ENCODE measurements at regions of chr10 and their contacts with region 1.

Region 1: GRCh38 chr10:75099952-75100763 is 11.3 kb upstream of the SAMD8 start:
- DNase-seq: peak; percentile 52
- H3K4me3 ChIP-seq: no peak overlapping the region
- H3K27ac ChIP-seq: no peak overlapping the region
- H3K4me1 ChIP-seq: no peaks in the 10 kb centered on the region
- H3K27me3 ChIP-seq: no peaks in the 10 kb centered on the region
- CTCF ChIP-seq: peak; percentile 92 to 98
- POLR2A ChIP-seq: no peak

Region 2: GRCh38 chr10:74244097-74244685 is 856.0 kb before region 1 on chr10:
- CTCF ChIA-PET with region 1: interaction called, 124 read pairs
- POLR2A ChIA-PET with region 1: no interaction called
- dilution Hi-C with region 1: no loop called
- intact Hi-C with region 1: loop called (anchors 1 kb)
- DNase-seq: peak; percentile 75
- H3K4me3 ChIP-seq: no peak overlapping the region
- H3K27ac ChIP-seq: no peak overlapping the region
- H3K4me1 ChIP-seq: peaks cover 3% of the 10 kb centered on the region
- H3K27me3 ChIP-seq: no peaks in the 10 kb centered on the region
- CTCF ChIP-seq: peak; percentile 7 to 26
- POLR2A ChIP-seq: no peak

Region 3: GRCh38 chr10:74255888-74256357 is 844.2 kb before region 1 on chr10:
- CTCF ChIA-PET with region 1: interaction called, 13 read pairs
- POLR2A ChIA-PET with region 1: no interaction called
- dilution Hi-C with region 1: no loop called
- intact Hi-C with region 1: no loop called
- DNase-seq: no peak
- H3K4me3 ChIP-seq: no peak overlapping the region
- H3K27ac ChIP-seq: no peak overlapping the region
- H3K4me1 ChIP-seq: peaks cover 2% of the 10 kb centered on the region
- H3K27me3 ChIP-seq: no peaks in the 10 kb centered on the region
- CTCF ChIP-seq: no peak
- POLR2A ChIP-seq: no peak

Region 4: GRCh38 chr10:74262856-74263255 is 837.3 kb before region 1 on chr10:
- CTCF ChIA-PET with region 1: interaction called, 13 read pairs
- POLR2A ChIA-PET with region 1: no interaction called
- dilution Hi-C with region 1: no loop called
- intact Hi-C with region 1: loop called (anchors 1 kb)
- DNase-seq: no peak
- H3K4me3 ChIP-seq: no peak overlapping the region
- H3K27ac ChIP-seq: no peak overlapping the region
- H3K4me1 ChIP-seq: peaks cover 2% of the 10 kb centered on the region
- H3K27me3 ChIP-seq: no peaks in the 10 kb centered on the region
- CTCF ChIP-seq: no peak
- POLR2A ChIP-seq: no peak

Region 5: GRCh38 chr10:74419958-74420375 is 680.2 kb before region 1 on chr10:
- CTCF ChIA-PET with region 1: interaction called, 3 read pairs
- POLR2A ChIA-PET with region 1: no interaction called
- dilution Hi-C with region 1: no loop called
- intact Hi-C with region 1: loop called (anchors 5 kb)
- DNase-seq: peak; percentile 49
- H3K4me3 ChIP-seq: no peak overlapping the region
- H3K27ac ChIP-seq: no peak overlapping the region
- H3K4me1 ChIP-seq: no peaks in the 10 kb centered on the region
- H3K27me3 ChIP-seq: no peaks in the 10 kb centered on the region
- CTCF ChIP-seq: peak in 1 of 2 donors; percentile 23
- POLR2A ChIP-seq: no peak

Region 6: DNA sequence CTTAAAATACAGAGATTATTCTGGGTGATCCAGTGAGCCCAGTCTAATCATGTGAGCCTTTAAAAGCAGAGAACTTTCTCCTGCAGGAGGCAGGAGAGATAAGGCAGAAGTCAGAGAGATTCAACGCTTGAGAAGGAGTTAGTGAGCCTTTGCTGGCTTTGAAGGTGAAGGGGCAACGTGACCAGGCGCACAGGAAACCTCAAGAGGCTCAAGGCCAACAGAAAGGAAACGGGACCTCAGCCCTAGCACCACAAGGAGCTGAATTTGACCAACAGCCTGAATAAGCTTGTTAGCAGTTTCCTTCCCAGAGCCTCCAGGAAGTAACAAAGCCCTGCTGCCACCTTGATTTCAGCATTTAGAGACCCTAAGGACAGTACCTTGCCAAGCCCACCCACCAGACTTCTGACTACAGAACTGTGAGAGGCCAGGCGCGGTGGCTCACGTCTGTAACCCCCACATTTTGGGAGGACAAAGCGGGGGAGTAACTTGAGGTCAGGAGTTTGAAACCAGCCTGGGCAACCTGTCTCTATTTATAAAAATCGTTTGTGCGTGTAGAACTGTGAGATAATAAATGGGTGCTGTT is 361.1 kb before region 1 on chr10:
- CTCF ChIA-PET with region 1: interaction called, 3 read pairs
- POLR2A ChIA-PET with region 1: no interaction called
- dilution Hi-C with region 1: no loop called
- intact Hi-C with region 1: loop called (anchors 10 kb)
- DNase-seq: peak; percentile 57
- H3K4me3 ChIP-seq: no peak overlapping the region
- H3K27ac ChIP-seq: no peak overlapping the region
- H3K4me1 ChIP-seq: peaks cover 9% of the 10 kb centered on the region
- H3K27me3 ChIP-seq: no peaks in the 10 kb centered on the region
- CTCF ChIP-seq: peak; percentile 7 to 27
- POLR2A ChIP-seq: no peak

Region 7: GRCh38 chr10:76432274-76433012 is 1332.3 kb after region 1 on chr10:
- CTCF ChIA-PET with region 1: no interaction called
- POLR2A ChIA-PET with region 1: no interaction called
- dilution Hi-C with region 1: no loop called
- intact Hi-C with region 1: no loop called
- DNase-seq: no peak
- H3K4me3 ChIP-seq: no peak overlapping the region
- H3K27ac ChIP-seq: no peak overlapping the region
- H3K4me1 ChIP-seq: no peaks in the 10 kb centered on the region
- H3K27me3 ChIP-seq: no peaks in the 10 kb centered on the region
- CTCF ChIP-seq: no peak
- POLR2A ChIP-seq: no peak

Measured in endothelial cell of umbilical vein (primary cell).